A673 (cell line): ENCODE measurements at regions of chr4 and their contacts with region 1.

Region 1: DNA sequence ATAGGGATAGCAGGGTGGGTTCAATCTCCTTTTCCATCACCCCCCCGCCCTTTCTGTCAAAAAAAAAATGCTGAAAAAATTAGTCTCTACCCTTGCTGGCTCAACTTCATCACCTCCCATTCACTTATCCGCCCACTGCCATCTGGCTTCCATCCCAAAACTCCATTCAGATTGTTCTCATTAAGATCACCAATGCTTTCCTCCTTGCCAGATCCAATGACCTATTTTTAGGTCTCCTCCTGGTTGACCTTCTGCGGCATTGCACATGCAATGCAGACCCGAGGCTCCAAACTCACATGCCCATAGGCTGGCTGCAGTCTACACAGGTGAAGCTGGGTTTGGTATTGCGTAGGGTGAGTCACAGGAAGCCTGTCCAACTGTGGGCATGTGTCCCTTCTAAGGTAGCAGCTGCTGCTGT is 21.1 kb upstream of the STIM2 start:
- DNase-seq: peak; percentile 93
- H3K4me3 ChIP-seq: no peak overlapping the region
- H3K27ac ChIP-seq: peak overlapping the region; percentile 89
- H3K4me1 ChIP-seq: peaks cover 47% of the 10 kb centered on the region
- H3K27me3 ChIP-seq: no peaks in the 10 kb centered on the region
- CTCF ChIP-seq: no peak

Region 2: DNA sequence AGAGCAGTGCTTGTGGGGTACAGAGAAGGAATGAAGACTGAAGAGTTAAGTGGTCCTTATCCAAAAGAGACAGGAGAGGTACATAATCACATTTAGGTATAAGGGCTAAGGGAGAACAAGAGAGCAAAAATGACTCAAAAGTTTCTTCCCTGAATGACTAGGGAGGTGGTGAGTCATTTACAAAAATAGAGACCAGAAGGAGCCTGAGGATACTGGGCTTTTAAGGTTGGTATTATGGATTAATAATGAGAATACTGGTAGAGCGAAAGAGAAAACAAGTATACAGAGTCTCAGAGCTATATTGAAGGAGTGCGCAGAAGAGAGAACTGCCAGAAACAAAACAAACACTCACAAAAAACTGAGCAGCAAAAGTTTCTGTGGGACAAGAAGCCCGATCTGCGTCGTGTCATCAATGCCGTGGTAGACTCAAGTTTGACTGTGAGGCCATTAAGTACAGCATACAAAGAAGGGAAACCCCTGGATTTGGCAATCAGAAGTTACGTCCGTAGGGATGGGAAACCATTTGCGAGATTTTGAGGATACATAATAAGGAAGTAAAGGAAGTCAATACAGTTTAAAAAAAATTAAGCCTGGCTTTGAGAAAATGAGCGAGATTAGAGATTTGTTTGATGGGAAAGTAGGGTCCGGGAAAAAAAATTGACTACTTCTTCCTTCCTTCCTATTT is 108.0 kb before region 1 on chr4:
- CTCF ChIA-PET with region 1: no interaction called
- POLR2A ChIA-PET with region 1: interaction called, 10 read pairs
- intact Hi-C with region 1: no loop called
- DNase-seq: no peak
- H3K4me3 ChIP-seq: no peak overlapping the region
- H3K27ac ChIP-seq: no peak overlapping the region
- H3K4me1 ChIP-seq: no peaks in the 10 kb centered on the region
- H3K27me3 ChIP-seq: no peaks in the 10 kb centered on the region
- CTCF ChIP-seq: no peak

Region 3: DNA sequence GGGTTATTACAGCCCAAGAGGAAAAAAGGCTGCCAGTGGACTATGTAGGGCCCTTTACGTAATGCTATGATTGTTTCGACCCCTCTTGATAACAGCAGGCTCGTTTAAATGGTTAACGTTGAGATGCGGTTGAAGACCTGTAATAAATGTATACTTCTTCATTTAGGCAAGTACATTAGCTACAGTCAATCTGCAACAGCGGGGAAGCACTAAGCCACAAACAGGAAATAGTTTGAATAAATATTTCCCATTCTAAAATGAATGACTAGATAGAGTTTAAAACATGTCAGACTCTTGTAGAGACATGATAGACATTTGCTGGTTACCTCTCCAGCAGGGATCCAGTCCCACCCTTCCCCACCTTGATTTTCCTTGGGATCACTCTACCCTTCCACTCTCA is 17.0 kb before region 1 on chr4:
- CTCF ChIA-PET with region 1: no interaction called
- POLR2A ChIA-PET with region 1: no interaction called
- intact Hi-C with region 1: loop called (anchors 2 kb)
- DNase-seq: peak; percentile 82
- H3K4me3 ChIP-seq: no peak overlapping the region
- H3K27ac ChIP-seq: peak overlapping the region; percentile 87
- H3K4me1 ChIP-seq: peaks cover 44% of the 10 kb centered on the region
- H3K27me3 ChIP-seq: no peaks in the 10 kb centered on the region
- CTCF ChIP-seq: no peak

Region 4: DNA sequence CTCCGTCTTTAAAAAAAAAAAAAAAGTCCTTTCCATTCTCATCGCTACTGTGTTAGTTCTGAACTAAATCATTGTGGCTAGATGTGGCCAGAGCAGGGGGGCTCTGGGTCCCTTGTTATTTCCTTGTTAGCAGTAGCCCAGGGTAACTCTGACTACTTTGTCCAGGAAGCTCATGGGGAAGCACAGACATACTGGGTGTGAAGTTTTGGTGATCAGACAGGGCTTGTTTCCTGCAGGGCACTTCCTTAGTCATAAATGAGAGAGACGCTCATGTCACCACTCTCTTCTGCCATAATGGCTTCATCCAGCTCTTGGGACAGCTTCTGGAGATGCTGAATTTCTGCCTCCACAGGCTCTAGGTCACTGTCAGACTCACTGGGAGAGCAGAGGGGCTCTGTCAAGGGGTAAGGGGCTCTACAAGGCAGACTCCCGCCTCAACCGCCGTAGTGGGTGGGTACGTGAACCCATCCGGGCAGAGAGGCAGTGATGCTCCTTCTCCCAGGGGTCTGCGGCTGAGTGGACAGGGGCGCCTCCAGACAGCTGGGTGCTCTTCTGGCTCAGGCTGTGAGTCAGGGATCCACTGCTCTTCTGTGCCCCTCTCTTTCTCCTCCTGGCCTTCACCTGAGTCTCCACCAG is 34.0 kb after region 1 on chr4:
- CTCF ChIA-PET with region 1: no interaction called
- POLR2A ChIA-PET with region 1: interaction called, 11 read pairs
- intact Hi-C with region 1: no loop called
- DNase-seq: no peak
- H3K4me3 ChIP-seq: no peak overlapping the region
- H3K27ac ChIP-seq: peak overlapping the region; percentile 25
- H3K4me1 ChIP-seq: peaks cover 58% of the 10 kb centered on the region
- H3K27me3 ChIP-seq: no peaks in the 10 kb centered on the region
- CTCF ChIP-seq: no peak